ENCODE measurements at regions of chr4 and their contacts with region 1.

Region 1: DNA sequence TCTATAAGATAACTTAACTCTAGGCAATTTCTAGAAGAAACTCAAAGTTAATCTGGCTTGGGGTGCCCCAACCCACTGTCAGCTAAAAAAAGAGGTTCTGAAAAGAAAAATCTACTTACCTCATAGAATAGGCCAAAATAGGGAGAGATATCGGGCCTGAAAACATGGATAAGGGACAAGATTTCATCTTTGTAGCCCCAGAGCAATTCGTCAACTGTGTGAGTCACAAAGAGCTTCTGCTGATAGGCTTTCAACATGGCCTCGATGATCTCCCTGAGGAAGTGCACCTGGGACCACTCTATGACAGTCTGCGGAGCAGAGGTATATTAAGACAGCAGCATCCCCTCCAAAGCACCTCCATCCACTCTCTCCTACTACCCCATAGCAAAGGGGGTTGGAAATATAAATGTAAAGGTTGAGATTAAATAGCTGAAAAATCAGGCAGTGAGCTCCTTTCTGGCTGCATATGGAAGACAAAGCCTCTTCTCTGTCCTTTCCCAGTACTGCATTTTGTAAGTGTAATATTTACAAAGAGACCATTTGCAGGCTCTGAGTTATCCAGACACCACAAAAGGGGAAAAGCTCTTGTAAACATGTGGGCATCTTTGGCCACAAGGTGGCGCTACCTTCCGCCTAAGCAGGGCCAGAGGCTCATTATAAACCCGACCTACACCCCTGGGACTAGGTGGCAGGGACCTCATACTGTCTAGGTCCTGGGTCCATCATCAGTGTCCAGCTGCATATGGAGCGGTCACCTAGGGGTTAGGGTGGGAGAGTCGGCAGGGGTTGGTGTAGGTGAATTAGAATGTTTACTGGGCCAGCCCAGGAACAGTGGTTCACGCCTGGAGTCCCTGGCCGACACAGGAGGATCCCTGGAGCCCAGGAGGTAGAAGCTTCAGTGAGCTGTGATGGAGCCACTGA is 31.5 kb upstream of the NUP54 start:
- DNase-seq: peak; percentile 56 to 84 (median 70)
- H3K4me3 ChIP-seq: no peak overlapping the region
- H3K4me3 Mint-ChIP-seq: no peak overlapping the region
- H3K27ac ChIP-seq: no peak overlapping the region
- H3K27ac Mint-ChIP-seq: peak overlapping the region in 2 of 8 donors; percentile 39 to 61
- H3K4me1 ChIP-seq: no peaks in the 10 kb centered on the region
- H3K4me1 Mint-ChIP-seq: peaks cover 0 to 3% (median 0%) of the 10 kb centered on the region in 3 donors
- H3K27me3 ChIP-seq: no peaks in the 10 kb centered on the region
- H3K27me3 Mint-ChIP-seq: no peaks in the 10 kb centered on the region

Region 2: DNA sequence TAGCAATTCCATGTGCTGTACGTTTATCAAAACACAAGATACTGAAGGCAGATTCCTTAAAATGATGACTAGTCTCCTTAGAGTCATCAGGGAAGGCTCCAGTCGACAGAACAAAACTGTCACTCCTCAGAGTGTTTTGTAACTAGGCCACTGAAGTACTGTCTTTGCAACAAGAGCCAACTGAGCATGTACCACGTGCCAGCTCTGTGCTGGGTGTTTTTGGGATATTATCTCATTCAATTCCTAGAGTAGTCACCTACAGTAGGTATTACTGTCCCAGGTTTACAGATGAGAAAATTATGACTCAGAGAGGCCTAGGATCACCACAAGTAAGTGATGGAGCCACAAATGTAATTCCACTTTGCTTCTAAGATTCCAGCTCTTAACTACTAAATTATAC is 13.2 kb before region 1 on chr4:
- CTCF ChIA-PET with region 1: interaction called, 11 read pairs
- POLR2A ChIA-PET with region 1: no interaction called
- DNase-seq: no peak
- H3K4me3 ChIP-seq: no peak overlapping the region
- H3K4me3 Mint-ChIP-seq: no peak overlapping the region
- H3K27ac ChIP-seq: no peak overlapping the region
- H3K27ac Mint-ChIP-seq: no peak overlapping the region
- H3K4me1 ChIP-seq: no peaks in the 10 kb centered on the region
- H3K4me1 Mint-ChIP-seq: no peaks in the 10 kb centered on the region
- H3K27me3 ChIP-seq: no peaks in the 10 kb centered on the region
- H3K27me3 Mint-ChIP-seq: no peaks in the 10 kb centered on the region

Region 3: DNA sequence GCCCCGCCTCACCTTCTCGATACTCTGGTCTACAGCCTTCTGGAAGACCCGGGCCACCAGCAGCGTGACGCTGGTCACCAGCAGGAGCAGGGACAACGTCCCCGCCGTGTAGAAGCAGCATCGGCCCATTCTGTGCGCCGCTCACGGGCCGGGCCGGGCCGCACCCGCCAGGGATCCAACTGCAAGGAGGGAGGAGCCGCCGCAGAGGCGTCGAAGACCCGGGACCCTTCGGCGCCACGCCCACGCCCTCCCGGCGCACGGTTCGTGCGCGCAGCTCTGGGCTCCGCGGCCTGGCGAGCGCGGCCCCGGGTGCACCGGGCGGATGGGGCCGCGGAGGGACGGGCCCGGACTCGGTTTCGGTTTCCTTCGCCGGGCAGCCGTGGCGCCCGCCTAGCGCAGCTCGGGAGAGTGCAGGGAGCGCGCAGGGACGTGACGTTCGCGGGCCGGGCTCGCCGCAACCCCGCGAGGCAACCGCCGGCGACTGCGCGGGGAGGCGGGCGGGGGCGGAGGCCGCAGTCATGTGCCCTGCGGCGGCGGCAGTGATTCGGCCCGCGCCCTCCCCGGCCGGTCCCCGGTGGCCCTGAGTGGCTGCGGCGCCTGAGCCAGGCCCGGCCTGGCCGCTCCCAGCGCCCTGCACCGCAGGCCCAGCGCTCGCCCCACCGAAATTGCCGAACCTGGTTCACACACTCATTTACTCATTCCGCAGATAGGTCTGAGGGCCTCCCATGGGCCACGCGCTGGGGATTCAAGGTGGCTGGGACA is 33.9 kb after region 1 on chr4 and contains the start of gene SCARB2:
- CTCF ChIA-PET with region 1: interaction called, 32 read pairs
- POLR2A ChIA-PET with region 1: no interaction called
- DNase-seq: peak; percentile 64 to 84 (median 79)
- H3K4me3 ChIP-seq: peak within 1 kb of the TSS; percentile 75
- H3K4me3 Mint-ChIP-seq: peak within 1 kb of the TSS; percentile 86 to 98 (median 91)
- H3K27ac ChIP-seq: peak within 1 kb of the TSS; percentile 74
- H3K27ac Mint-ChIP-seq: peak within 1 kb of the TSS; percentile 86 to 100 (median 97)
- H3K4me1 ChIP-seq: peaks cover 35% of the 10 kb centered on the region
- H3K4me1 Mint-ChIP-seq: peaks cover 44 to 57% (median 57%) of the 10 kb centered on the region in 3 donors
- H3K27me3 ChIP-seq: no peaks in the 10 kb centered on the region
- H3K27me3 Mint-ChIP-seq: peaks cover 0 to 2% of the 10 kb centered on the region in 2 donors
- total RNA-seq, gene SCARB2: 6.2 to 6.7 TPM

Region 4: GRCh38 chr4:76377911-76378310 is 198.3 kb after region 1 on chr4:
- CTCF ChIA-PET with region 1: interaction called, 52 read pairs
- POLR2A ChIA-PET with region 1: no interaction called
- DNase-seq: peak; percentile 15 to 52 (median 23)
- H3K4me3 ChIP-seq: no peak overlapping the region
- H3K4me3 Mint-ChIP-seq: no peak overlapping the region
- H3K27ac ChIP-seq: no peak overlapping the region
- H3K27ac Mint-ChIP-seq: no peak overlapping the region
- H3K4me1 ChIP-seq: no peaks in the 10 kb centered on the region
- H3K4me1 Mint-ChIP-seq: peaks cover 1 to 7% (median 6%) of the 10 kb centered on the region in 3 donors
- H3K27me3 ChIP-seq: no peaks in the 10 kb centered on the region
- H3K27me3 Mint-ChIP-seq: peaks cover 4 to 9% of the 10 kb centered on the region in 2 donors

Region 5: GRCh38 chr4:76504613-76505465 is 325.2 kb after region 1 on chr4:
- CTCF ChIA-PET with region 1: interaction called, 27 read pairs
- POLR2A ChIA-PET with region 1: no interaction called
- DNase-seq: peak in 1 of 5 donors; percentile 14
- H3K4me3 ChIP-seq: no peak overlapping the region
- H3K4me3 Mint-ChIP-seq: no peak overlapping the region
- H3K27ac ChIP-seq: no peak overlapping the region
- H3K27ac Mint-ChIP-seq: no peak overlapping the region
- H3K4me1 ChIP-seq: no peaks in the 10 kb centered on the region
- H3K4me1 Mint-ChIP-seq: no peaks in the 10 kb centered on the region
- H3K27me3 ChIP-seq: no peaks in the 10 kb centered on the region
- H3K27me3 Mint-ChIP-seq: peaks cover 9 to 30% of the 10 kb centered on the region in 2 donors

Measured in CD8-positive, alpha-beta memory T cell (primary cell).